ENCODE measurements at regions of chr11 and their contacts with region 1.

Region 1: DNA sequence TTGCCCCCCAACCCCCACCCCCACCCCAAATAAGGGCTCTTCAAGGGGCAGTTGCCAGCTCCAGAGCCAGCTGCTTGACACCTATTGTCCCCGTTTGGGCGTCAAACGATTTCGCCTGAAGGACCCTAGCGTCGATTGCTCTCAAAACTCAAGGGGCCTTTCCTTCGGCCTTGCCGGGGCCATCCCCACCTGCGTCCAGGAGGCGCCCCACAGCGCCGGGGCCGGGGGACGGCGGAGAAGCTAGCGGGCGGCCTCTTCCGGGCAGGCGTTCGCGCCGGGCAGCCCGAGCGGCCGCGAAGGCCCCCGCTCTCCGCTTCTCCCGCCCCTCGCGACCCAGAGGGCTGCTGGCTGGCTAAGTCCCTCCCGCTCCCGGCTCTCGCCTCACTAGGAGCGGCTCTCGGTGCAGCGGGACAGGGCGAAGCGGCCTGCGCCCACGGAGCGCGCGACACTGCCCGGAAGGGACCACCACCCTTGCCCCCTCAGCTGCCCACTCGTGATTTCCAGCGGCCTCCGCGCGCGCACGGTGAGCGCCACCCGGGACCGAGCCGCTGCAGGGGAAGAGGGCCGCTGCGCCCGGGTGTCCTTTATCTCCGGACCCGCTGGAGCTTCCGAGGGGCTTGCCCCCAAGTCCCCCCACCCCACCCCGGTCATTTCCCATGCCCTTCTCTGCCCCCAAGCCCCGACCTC is at the start of gene CAPRIN1:
- DNase-seq: peak; percentile 91
- ATAC-seq: peak; percentile 78
- H3K4me3 Mint-ChIP-seq: peak within 1 kb of the TSS; percentile 98
- H3K27ac Mint-ChIP-seq: peak within 1 kb of the TSS; percentile 99
- H3K4me1 Mint-ChIP-seq: peaks cover 17% of the 10 kb centered on the region
- H3K27me3 Mint-ChIP-seq: peaks cover 2% of the 10 kb centered on the region
- total RNA-seq, gene CAPRIN1: 295 to 316 TPM

Region 2: GRCh38 chr11:33161120-33162005 is 890.1 kb before region 1 on chr11 and contains the start of gene CSTF3:
- CTCF ChIA-PET with region 1: no interaction called
- POLR2A ChIA-PET with region 1: no interaction called
- intact Hi-C with region 1: loop called in 1 of 2 experiments (anchors 5 kb)
- DNase-seq: peak; percentile 99
- ATAC-seq: peak; percentile 97
- H3K4me3 Mint-ChIP-seq: peak within 1 kb of the TSS; percentile 96
- H3K27ac Mint-ChIP-seq: peak within 1 kb of the TSS; percentile 100
- H3K4me1 Mint-ChIP-seq: peaks cover 43% of the 10 kb centered on the region
- H3K27me3 Mint-ChIP-seq: no peaks in the 10 kb centered on the region
- total RNA-seq, gene CSTF3: 29.6 to 35.3 TPM

Region 3: DNA sequence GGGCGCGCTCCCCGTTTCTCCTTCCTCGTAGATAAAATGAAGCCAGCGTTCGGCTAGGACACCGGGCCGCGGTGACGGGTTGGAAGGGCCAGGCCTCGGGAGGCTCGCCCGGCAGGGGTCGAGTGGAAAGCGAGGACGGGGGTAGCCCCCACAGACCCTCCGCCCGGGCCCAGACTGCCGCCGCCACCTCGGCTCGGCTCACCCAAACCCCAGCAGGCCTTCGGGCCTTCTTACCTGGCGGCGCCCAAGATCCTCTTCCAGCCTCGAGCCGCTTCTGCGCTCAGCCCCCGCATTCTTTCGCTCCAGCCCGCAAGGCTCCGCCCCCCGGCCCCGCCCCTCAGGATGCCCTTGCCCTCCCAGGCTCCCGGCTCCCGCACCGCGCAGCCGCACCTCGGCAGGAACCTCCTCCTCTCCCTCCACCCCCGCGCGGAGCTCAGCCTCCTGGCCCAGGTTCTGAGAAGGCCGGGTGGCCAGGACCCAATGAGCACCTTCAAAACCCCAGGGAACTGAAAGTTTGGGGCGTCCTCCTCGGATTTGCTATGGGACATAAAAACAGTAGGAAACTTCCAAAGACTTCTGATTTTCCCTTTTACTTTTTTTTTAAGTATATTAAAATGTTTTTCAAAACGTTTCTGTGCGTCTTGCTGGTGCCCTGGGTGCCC is 315.2 kb before region 1 on chr11 and contains the start of gene CD59:
- CTCF ChIA-PET with region 1: no interaction called
- POLR2A ChIA-PET with region 1: no interaction called
- intact Hi-C with region 1: loop called in 1 of 2 experiments (anchors 10 kb)
- DNase-seq: peak; percentile 95
- ATAC-seq: peak; percentile 74
- H3K4me3 Mint-ChIP-seq: peak within 1 kb of the TSS; percentile 82
- H3K27ac Mint-ChIP-seq: peak within 1 kb of the TSS; percentile 84
- H3K4me1 Mint-ChIP-seq: peaks cover 44% of the 10 kb centered on the region
- H3K27me3 Mint-ChIP-seq: peaks cover 16% of the 10 kb centered on the region
- total RNA-seq, gene CD59: 58.2 to 60.0 TPM

Region 4: GRCh38 chr11:33996498-33997454 is 54.7 kb before region 1 on chr11:
- CTCF ChIA-PET with region 1: interaction called, 17 read pairs
- POLR2A ChIA-PET with region 1: no interaction called
- intact Hi-C with region 1: loop called (anchors 1 to 5 kb)
- DNase-seq: peak; percentile 84
- ATAC-seq: peak; percentile 99
- H3K4me3 Mint-ChIP-seq: no peak overlapping the region
- H3K27ac Mint-ChIP-seq: no peak overlapping the region
- H3K4me1 Mint-ChIP-seq: peaks cover 9% of the 10 kb centered on the region
- H3K27me3 Mint-ChIP-seq: peaks cover 11% of the 10 kb centered on the region

Region 5: GRCh38 chr11:34234086-34234740 is 182.7 kb after region 1 on chr11:
- CTCF ChIA-PET with region 1: no interaction called
- POLR2A ChIA-PET with region 1: no interaction called
- intact Hi-C with region 1: loop called in 1 of 2 experiments (anchors 1 kb)
- DNase-seq: peak; percentile 89
- ATAC-seq: peak; percentile 93
- H3K4me3 Mint-ChIP-seq: peak overlapping the region; percentile 16
- H3K27ac Mint-ChIP-seq: peak overlapping the region; percentile 72
- H3K4me1 Mint-ChIP-seq: peaks cover 44% of the 10 kb centered on the region
- H3K27me3 Mint-ChIP-seq: peaks cover 3% of the 10 kb centered on the region

Region 6: DNA sequence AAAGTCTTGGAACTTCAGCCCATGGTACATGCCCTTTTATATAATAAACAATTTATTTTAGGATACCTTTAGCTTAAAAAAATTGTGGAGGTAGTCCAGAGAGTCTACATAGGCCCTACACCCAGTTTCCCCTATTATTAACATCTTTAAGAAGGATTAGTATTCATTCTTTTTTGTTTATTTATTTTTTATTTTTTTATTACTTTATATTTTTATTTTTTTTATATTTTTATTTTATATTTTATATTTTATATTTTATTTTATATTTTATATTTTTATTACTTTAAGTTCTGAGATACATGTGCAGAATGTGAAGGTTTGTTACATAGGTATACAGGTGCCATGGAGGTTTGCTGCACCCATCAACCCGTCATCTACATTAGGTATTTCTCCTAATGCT is 322.2 kb after region 1 on chr11:
- CTCF ChIA-PET with region 1: no interaction called
- POLR2A ChIA-PET with region 1: no interaction called
- intact Hi-C with region 1: loop called in 1 of 2 experiments (anchors 5 kb)
- DNase-seq: no peak
- ATAC-seq: no peak
- H3K4me3 Mint-ChIP-seq: no peak overlapping the region
- H3K27ac Mint-ChIP-seq: no peak overlapping the region
- H3K4me1 Mint-ChIP-seq: peaks cover 15% of the 10 kb centered on the region
- H3K27me3 Mint-ChIP-seq: peaks cover 8% of the 10 kb centered on the region